Aorta (tissue), 5 donors: ENCODE measurements at regions of chr1 and their contacts with region 1.

Region 1: DNA sequence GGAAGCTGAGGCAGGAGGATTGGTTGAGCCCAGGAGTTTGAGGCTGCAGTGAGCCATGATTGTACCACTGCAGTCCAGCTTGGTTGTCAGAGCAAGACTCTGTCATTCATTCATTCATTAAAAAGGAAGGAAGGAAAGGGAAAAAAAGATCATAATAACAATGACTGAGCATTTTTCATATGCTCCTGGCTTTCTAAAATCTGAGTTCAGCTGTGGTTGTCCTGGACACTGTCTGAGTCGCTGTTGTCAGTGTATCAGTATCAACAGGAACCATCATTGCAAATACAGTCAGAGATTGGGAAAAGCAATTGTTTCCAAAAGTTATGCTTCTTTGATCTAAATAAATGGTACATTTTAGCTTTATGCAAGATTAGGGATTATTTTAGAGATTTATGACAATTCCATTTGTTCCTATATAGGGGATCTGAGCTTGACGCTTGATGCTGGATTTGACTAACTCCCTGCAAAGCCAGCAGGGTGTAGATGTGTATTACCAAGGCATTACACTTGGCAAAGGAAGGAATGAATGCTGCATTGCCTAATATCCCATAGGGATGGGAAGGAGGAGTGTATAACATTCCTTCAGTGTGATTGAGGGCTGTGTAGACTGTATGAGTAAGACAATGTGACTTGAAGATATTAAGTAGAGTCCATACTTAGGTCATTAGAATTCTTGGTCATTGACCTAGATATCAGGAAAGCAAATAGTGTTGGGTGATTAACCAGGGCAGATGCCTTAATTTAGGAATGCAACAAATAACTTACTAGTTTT is 100.2 kb downstream of the DISP1 start:
- DNase-seq: no peak
- ATAC-seq: no peak
- H3K4me3 ChIP-seq: no peak overlapping the region
- H3K27ac ChIP-seq: no peak overlapping the region
- H3K4me1 ChIP-seq: peaks cover 0 to 3% of the 10 kb centered on the region in 2 donors
- H3K27me3 ChIP-seq: no peaks in the 10 kb centered on the region

Region 2: GRCh38 chr1:222814536-222815439 is 100.3 kb before region 1 on chr1 and contains the start of gene DISP1:
- intact Hi-C with region 1: loop called in 1 of 2 experiments (anchors 5 kb)
- DNase-seq: peak; percentile 87 to 94
- ATAC-seq: peak; percentile 96
- H3K4me3 ChIP-seq: peak within 1 kb of the TSS; percentile 83 to 85
- H3K27ac ChIP-seq: peak within 1 kb of the TSS; percentile 71 to 95
- H3K4me1 ChIP-seq: peaks cover 0 to 12% of the 10 kb centered on the region in 2 donors
- H3K27me3 ChIP-seq: no peaks in the 10 kb centered on the region
- total RNA-seq, gene DISP1: 8.4 to 11.4 TPM